ENCODE measurements at regions of chr18 and their contacts with region 1.

Region 1: DNA sequence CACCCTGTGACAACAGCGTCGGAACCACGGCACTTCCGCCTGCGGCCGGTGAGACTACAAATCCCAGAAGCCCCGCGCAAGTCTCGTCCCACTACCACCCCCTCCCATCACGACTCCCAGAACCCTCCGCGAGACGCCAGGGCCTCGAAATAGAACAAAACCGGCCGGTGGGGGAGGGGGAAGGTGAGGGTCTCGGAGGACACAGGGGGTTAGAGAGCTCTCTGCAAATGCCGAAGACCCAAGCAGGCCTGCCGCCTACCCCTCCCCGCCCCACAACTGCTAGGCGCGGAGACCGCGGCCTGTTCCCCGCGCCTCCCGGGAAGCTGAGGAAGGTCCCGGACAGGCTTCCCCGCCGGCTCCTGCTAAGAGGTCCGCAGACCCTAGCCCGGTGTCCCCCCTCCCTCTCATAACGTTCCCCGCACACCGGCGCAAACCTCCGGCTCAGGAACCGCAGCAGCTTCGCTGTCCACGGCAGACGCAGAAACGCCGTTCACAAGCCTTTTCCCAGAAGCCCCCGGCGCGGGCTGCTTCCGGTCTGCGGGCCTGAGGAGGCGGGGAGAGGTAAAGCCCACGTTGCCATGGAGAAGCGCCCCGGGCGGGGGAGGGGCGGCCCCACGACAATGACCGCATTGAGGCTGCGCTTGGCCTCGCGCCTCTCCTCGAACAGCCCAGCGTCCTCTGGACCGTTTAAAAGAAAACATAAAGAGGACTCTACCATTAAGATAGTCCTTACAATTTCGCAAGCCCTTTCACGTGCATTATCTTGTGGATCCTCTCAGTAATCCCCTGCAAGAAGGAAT is at the start of gene ZNF24:
- DNase-seq: peak; percentile 44
- H3K4me3 ChIP-seq: peak within 1 kb of the TSS; percentile 99
- H3K27me3 ChIP-seq: no peaks in the 10 kb centered on the region
- CTCF ChIP-seq: no peak
- polyA plus RNA-seq, gene ZNF24: 14.9 and 17.3 TPM in 2 replicates

Region 2: DNA sequence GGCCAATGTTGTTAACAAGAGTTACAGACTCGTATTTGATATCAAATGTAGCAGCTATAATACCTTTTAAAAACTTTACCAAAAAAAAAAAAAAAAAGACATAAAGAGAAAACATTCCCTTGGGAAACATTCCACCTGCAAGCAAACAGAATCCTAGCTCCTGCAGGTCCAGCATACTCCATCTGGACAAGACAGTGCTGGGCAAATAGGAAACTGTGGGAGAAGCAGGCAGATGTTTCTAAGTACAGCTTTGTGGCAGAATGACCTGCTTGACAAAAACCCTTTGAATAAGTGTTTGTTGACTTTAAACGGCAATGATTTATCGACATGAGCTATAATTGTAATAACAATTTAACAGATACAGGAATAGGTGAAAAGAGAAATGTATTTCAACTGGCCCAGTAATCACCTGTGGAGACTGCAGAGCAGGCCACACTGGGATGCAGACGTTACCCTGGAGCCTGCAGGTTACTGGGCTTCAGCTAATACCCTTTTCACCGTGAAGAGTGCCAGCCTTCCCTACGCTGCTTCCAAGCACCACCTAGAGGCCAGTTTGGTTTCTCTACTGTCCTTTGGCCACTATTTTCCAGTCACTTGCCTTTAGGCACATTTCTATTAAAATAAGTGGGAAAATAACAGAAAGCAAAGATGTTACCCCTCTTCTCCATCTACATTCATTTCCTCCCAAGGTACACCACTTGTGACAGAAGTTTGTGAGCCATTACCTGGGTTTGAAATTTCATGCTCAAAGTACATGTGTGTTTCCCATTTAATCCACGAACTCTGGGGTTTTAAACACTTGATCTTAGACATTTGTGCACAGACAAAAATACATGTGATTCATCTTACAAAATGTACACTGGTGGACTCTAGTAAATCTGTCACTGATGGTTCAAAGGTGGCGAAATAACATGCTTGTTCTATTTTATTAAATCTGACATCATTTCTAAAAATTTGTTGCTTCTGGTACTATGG is 200.2 kb before region 1 on chr18:
- CTCF ChIA-PET with region 1: no interaction called
- POLR2A ChIA-PET with region 1: interaction called, 12 read pairs
- DNase-seq: no peak
- H3K4me3 ChIP-seq: no peak overlapping the region
- H3K27me3 ChIP-seq: no peaks in the 10 kb centered on the region
- CTCF ChIP-seq: peak; percentile 87

Region 3: GRCh38 chr18:35231052-35231451 is 113.1 kb before region 1 on chr18:
- CTCF ChIA-PET with region 1: interaction called, 13 read pairs
- POLR2A ChIA-PET with region 1: no interaction called
- DNase-seq: no peak
- H3K4me3 ChIP-seq: no peak overlapping the region
- H3K27me3 ChIP-seq: no peaks in the 10 kb centered on the region
- CTCF ChIP-seq: peak; percentile 93

Region 4: DNA sequence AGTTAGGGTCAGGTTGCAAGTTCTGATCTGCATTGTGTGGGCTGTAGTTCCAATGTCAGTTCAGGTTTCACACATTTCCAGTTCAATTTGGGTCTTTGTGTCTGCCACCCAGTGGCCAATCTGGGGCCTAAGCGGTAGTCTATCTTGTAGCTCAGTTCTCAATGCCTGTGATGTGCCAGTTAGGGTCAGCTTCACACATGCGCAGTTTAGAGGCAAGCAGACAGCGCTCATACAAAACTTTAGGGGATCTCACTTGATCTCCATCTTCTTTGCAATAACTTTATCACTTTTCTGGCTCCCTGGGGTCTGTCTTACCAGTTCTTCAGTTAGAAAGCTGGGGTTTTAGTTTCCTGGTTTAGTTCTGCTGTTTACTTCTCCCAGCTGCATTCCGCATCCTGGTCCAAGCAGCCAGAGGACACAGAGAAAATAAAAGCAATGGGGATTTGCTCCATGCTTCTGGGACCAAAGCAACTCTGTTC is 11.0 kb after region 1 on chr18:
- CTCF ChIA-PET with region 1: interaction called, 14 read pairs
- POLR2A ChIA-PET with region 1: no interaction called
- DNase-seq: no peak
- H3K4me3 ChIP-seq: no peak overlapping the region
- H3K27me3 ChIP-seq: no peaks in the 10 kb centered on the region
- CTCF ChIP-seq: peak; percentile 87

Region 5: GRCh38 chr18:35535297-35535696 is 191.2 kb after region 1 on chr18:
- CTCF ChIA-PET with region 1: no interaction called
- POLR2A ChIA-PET with region 1: no interaction called
- DNase-seq: no peak
- H3K4me3 ChIP-seq: no peak overlapping the region
- H3K27me3 ChIP-seq: no peaks in the 10 kb centered on the region
- CTCF ChIP-seq: no peak